Sigmoid colon (tissue), 7 donors: ENCODE measurements at regions of chr11 and their contacts with region 1.

Region 1: GRCh38 chr11:30917859-30918478 is 331.8 kb upstream of the MPPED2 start:
- DNase-seq: no peak
- H3K4me3 ChIP-seq: no peak overlapping the region
- H3K27ac ChIP-seq: no peak overlapping the region
- H3K4me1 ChIP-seq: peaks cover 0 to 3% (median 0%) of the 10 kb centered on the region in 4 donors
- H3K27me3 ChIP-seq: no peaks in the 10 kb centered on the region
- CTCF ChIP-seq: peak; percentile 13 to 63 (median 39)
- EP300 ChIP-seq: no peak
- POLR2A ChIP-seq: no peak

Region 2: GRCh38 chr11:29432719-29433325 is 1485.1 kb before region 1 on chr11:
- intact Hi-C with region 1: loop called (anchors 5 kb)
- DNase-seq: no peak
- H3K4me3 ChIP-seq: no peak overlapping the region
- H3K27ac ChIP-seq: no peak overlapping the region
- H3K4me1 ChIP-seq: no peaks in the 10 kb centered on the region
- H3K27me3 ChIP-seq: no peaks in the 10 kb centered on the region
- CTCF ChIP-seq: peak in 2 of 4 experiments; percentile 15 to 37
- EP300 ChIP-seq: no peak
- POLR2A ChIP-seq: no peak

Region 3: GRCh38 chr11:30143098-30143705 is 774.8 kb before region 1 on chr11:
- intact Hi-C with region 1: loop called (anchors 5 kb)
- DNase-seq: no peak
- H3K4me3 ChIP-seq: no peak overlapping the region
- H3K27ac ChIP-seq: no peak overlapping the region
- H3K4me1 ChIP-seq: no peaks in the 10 kb centered on the region
- H3K27me3 ChIP-seq: no peaks in the 10 kb centered on the region
- CTCF ChIP-seq: peak in 1 of 4 experiments; percentile 61
- EP300 ChIP-seq: no peak
- POLR2A ChIP-seq: no peak